Activated T-helper 1 cell treated with anti-CD3 and anti-CD28 coated beads, Interleukin-12 subunit alpha, Interleukin-12 subunit beta, Interleukin-2, Interleukin-4 antibody, amounts not matched to agents 30 ng/mL and 10 ng/mL and 1 ng/mL, durations not matched to agents 14 hours and 24 hours and 36 hours (primary cell): ENCODE measurements at regions of chr1 and their contacts with region 1.

Region 1: DNA sequence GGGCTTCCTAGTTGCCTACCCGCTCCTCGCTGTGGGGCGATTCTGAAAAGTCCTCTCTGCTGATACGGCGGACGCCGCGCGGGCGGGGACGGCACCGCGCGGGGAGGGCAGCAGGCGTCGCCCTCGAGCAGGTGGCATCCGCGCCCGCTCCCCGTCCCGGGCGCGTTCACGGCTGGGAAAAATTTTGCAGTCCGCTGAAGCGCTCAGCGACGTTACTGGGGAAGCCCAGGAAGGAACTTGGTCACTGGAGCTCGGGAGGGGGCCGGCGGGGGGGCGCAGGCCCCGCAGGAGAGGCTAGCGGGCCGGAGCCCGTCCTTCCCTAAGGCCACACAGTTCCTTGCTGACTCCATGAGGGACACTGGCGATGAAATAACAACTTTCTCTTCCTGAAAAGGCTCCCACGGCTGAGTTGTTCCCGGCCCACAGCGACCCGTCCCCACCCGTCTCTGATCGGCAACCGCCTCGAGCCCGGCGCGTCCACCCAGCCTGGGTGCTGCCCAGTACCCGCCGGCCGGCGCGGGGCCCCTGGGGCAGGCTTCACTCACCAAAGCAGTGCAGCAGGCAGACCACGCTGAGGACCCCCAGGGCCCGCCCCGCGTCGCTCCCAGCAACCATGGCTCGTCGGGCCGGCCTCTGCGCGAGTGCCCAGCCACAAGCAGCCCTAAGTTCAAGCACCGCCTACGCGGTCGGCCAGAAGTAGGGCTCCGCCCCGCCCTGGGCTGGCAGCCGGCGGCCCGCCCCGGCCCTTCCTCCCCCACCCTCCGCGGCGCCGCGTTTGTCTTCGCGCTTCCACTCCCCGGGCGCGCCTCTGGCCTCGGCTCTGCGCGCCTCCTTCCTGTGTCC is at the start of gene CD58:
- DNase-seq: peak; percentile 81
- H3K4me3 Mint-ChIP-seq: peak within 1 kb of the TSS; percentile 90
- H3K27ac Mint-ChIP-seq: peak within 1 kb of the TSS; percentile 90
- H3K4me1 Mint-ChIP-seq: peaks cover 74% of the 10 kb centered on the region
- H3K27me3 Mint-ChIP-seq: no peaks in the 10 kb centered on the region
- total RNA-seq, gene CD58: 35.3 and 37.8 TPM in 2 replicates

Region 2: GRCh38 chr1:115648717-115649691 is 921.6 kb before region 1 on chr1:
- intact Hi-C with region 1: no loop called
- DNase-seq: peak; percentile 36
- H3K4me3 Mint-ChIP-seq: no peak overlapping the region
- H3K27ac Mint-ChIP-seq: no peak overlapping the region
- H3K4me1 Mint-ChIP-seq: peaks cover 6% of the 10 kb centered on the region
- H3K27me3 Mint-ChIP-seq: peaks cover 6% of the 10 kb centered on the region

Region 3: GRCh38 chr1:116372587-116373444 is 197.8 kb before region 1 on chr1 and contains the start of gene ATP1A1:
- intact Hi-C with region 1: loop called (anchors 2 kb)
- DNase-seq: peak; percentile 95
- H3K4me3 Mint-ChIP-seq: peak within 1 kb of the TSS; percentile 95
- H3K27ac Mint-ChIP-seq: peak within 1 kb of the TSS; percentile 90
- H3K4me1 Mint-ChIP-seq: peaks cover 38% of the 10 kb centered on the region
- H3K27me3 Mint-ChIP-seq: peaks cover 12% of the 10 kb centered on the region
- total RNA-seq, gene ATP1A1: 238 and 240 TPM in 2 replicates

Region 4: GRCh38 chr1:116538544-116538943 is 32.0 kb before region 1 on chr1:
- intact Hi-C with region 1: loop called (anchors 1 kb)
- DNase-seq: peak; percentile 51
- H3K4me3 Mint-ChIP-seq: peak overlapping the region; percentile 28
- H3K27ac Mint-ChIP-seq: peak overlapping the region; percentile 79
- H3K4me1 Mint-ChIP-seq: peaks cover 68% of the 10 kb centered on the region
- H3K27me3 Mint-ChIP-seq: no peaks in the 10 kb centered on the region

Region 5: DNA sequence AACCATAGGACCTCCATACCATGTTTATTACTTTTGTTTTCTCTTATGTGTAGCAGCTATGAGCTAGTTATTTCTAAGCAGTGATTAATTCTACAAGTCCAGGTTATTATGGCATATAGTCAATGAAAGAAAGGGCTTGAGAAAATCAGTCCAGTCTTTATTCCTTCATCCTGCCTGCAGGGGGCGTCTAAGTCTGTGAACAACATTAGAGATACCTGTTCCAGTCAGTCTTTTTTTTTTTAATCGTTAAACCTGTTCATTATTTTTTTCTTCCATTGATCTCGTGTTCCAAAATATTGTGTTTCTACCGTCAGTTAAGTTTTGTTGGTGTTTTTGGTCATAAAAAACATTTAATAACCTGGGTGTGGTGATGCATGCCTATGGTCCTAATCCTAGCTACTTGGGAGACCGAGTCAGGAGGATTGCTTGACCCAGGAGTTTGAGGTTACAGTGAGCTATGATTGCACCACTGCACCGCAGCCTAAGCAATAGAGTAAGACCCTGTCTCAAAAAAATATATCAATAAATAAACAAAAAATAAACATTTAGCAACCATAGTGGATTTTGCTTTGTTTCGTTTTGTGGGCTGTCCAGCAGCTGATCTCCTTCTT is 154.3 kb after region 1 on chr1:
- intact Hi-C with region 1: loop called (anchors 2 kb)
- DNase-seq: peak; percentile 64
- H3K4me3 Mint-ChIP-seq: no peak overlapping the region
- H3K27ac Mint-ChIP-seq: no peak overlapping the region
- H3K4me1 Mint-ChIP-seq: peaks cover 43% of the 10 kb centered on the region
- H3K27me3 Mint-ChIP-seq: no peaks in the 10 kb centered on the region

Region 6: DNA sequence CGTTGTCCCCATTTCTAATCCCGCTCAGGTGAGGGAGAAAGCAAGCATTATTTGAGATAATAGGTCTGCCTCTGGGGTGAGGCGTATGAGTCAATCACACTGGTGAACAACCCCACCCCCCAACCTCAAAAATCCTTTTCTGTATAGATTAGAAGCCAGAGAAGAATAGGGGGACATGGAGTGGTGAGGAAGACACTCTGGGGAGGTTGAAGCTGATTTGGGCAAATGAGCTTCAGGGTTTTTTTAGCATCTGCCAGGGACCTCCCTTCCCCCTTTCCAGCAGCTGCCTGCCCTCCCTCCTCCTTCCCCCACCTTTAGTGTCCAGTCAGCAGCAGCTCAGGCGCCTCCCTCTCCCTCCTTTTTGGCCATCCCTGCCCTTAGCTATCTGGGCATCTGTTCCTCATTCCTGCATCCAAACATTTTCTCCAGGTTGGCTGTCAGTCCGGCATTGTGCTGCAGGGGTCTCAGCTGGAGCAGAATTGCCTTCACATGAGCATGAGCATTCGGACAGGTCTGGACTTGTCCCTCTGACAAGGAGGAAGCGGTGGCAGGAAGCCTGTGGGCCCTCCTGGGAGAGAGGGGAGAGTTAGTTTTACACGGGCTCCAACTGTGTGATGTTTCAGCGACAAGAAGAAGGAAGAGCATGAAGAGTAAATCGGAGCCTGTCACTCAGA is 308.4 kb after region 1 on chr1:
- intact Hi-C with region 1: no loop called
- DNase-seq: no peak
- H3K4me3 Mint-ChIP-seq: no peak overlapping the region
- H3K27ac Mint-ChIP-seq: no peak overlapping the region
- H3K4me1 Mint-ChIP-seq: peaks cover 21% of the 10 kb centered on the region
- H3K27me3 Mint-ChIP-seq: no peaks in the 10 kb centered on the region

Region 7: DNA sequence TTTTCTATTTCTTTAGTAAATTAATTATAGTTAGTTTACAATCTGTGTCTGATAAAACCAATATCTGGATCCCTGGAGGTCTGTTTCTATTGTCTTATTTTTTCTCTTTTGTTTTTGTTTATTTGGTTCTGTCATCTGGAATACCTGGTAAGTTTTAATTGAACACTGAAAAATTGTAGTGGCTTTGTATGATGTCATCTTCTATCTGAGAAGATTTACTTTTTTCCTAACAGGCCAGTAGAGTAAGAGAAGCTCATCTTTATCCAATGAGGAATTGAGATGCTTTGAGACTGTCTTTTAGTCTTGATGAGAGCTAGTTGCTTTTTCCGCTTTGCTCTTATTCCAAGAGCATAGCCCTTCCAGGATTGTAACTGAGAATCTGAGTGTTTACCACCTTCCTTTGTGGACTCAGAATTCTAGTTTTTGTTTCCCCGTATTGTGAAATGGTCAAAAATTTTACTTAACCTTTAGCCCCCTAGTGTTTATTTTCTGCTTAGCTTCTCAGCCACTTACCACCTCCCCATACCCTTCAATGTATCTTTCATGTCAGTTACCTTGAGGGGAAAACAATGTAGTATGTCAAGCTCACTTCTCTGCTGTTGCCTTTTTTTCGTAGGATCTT is 364.1 kb after region 1 on chr1:
- intact Hi-C with region 1: loop called (anchors 5 kb)
- DNase-seq: no peak
- H3K4me3 Mint-ChIP-seq: peak overlapping the region; percentile 25
- H3K27ac Mint-ChIP-seq: peak overlapping the region; percentile 75
- H3K4me1 Mint-ChIP-seq: peaks cover 27% of the 10 kb centered on the region
- H3K27me3 Mint-ChIP-seq: no peaks in the 10 kb centered on the region

Region 8: GRCh38 chr1:117121776-117122697 is 551.5 kb after region 1 on chr1:
- intact Hi-C with region 1: loop called (anchors 1 kb)
- DNase-seq: peak; percentile 79
- H3K4me3 Mint-ChIP-seq: peak overlapping the region; percentile 84
- H3K27ac Mint-ChIP-seq: peak overlapping the region; percentile 46
- H3K4me1 Mint-ChIP-seq: peaks cover 7% of the 10 kb centered on the region
- H3K27me3 Mint-ChIP-seq: peaks cover 9% of the 10 kb centered on the region